ENCODE measurements at regions of chr5 and their contacts with region 1.

Region 1: GRCh38 chr5:88826646-88827585 is 56.1 kb downstream of the MEF2C start:
- DNase-seq: peak; percentile 26
- ATAC-seq: peak; percentile 71
- H3K4me3 Mint-ChIP-seq: peak overlapping the region; percentile 5
- H3K27ac Mint-ChIP-seq: peak overlapping the region; percentile 1
- H3K4me1 Mint-ChIP-seq: peaks cover 43% of the 10 kb centered on the region
- H3K27me3 Mint-ChIP-seq: peaks cover 25% of the 10 kb centered on the region

Region 2: GRCh38 chr5:88518131-88519016 is 308.5 kb before region 1 on chr5:
- CTCF ChIA-PET with region 1: no interaction called
- POLR2A ChIA-PET with region 1: no interaction called
- intact Hi-C with region 1: no loop called
- DNase-seq: no peak
- ATAC-seq: no peak
- H3K4me3 Mint-ChIP-seq: no peak overlapping the region
- H3K27ac Mint-ChIP-seq: no peak overlapping the region
- H3K4me1 Mint-ChIP-seq: no peaks in the 10 kb centered on the region
- H3K27me3 Mint-ChIP-seq: peaks cover 15% of the 10 kb centered on the region

Region 3: DNA sequence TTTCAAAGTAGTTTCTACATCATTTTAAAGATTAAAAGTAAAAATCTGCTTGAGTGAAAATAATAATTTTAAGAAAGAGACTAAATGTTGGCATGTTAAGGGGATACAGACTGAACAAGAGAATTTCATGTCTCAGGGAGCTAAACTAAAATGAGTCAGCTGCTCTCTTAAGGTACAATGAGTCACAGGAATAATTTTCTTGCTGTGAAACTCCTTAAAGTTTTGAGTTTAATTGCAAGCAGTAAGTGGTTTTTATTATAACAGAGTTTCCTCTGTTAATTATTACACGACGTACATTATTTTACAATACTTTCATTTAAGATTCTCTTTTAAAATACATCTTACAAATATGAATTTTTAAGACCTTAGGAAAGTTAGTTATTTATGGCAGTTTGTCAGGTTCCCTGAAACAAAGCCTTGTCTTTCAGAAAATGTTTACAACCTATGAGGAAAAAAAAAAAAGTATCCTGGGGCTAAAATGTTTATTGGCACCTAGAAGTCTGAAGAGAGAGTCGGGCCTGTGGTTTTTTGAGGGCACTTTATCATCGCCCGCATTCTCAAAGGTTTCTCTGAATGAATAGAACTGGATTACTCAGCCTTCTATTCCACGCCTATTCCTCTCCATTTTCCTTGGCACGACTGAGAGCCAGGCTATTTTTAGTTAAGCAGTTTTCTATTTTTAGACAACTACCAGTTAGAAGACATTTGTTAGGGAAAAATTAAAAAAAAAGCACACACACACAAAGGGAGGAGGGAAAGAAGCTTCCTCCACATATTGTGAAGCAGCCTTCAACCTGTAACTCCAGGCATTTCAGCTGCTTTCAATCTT is 41.3 kb before region 1 on chr5:
- CTCF ChIA-PET with region 1: interaction called, 3 read pairs
- POLR2A ChIA-PET with region 1: no interaction called
- intact Hi-C with region 1: loop called (anchors 1 kb)
- DNase-seq: peak; percentile 30
- ATAC-seq: peak; percentile 89
- H3K4me3 Mint-ChIP-seq: no peak overlapping the region
- H3K27ac Mint-ChIP-seq: no peak overlapping the region
- H3K4me1 Mint-ChIP-seq: peaks cover 17% of the 10 kb centered on the region
- H3K27me3 Mint-ChIP-seq: peaks cover 12% of the 10 kb centered on the region

Region 4: GRCh38 chr5:88845081-88845697 is 18.3 kb after region 1 on chr5:
- CTCF ChIA-PET with region 1: interaction called, 3 read pairs
- POLR2A ChIA-PET with region 1: no interaction called
- intact Hi-C with region 1: loop called (anchors 1 kb)
- DNase-seq: no peak
- ATAC-seq: peak; percentile 95
- H3K4me3 Mint-ChIP-seq: no peak overlapping the region
- H3K27ac Mint-ChIP-seq: no peak overlapping the region
- H3K4me1 Mint-ChIP-seq: peaks cover 11% of the 10 kb centered on the region
- H3K27me3 Mint-ChIP-seq: peaks cover 17% of the 10 kb centered on the region

Region 5: DNA sequence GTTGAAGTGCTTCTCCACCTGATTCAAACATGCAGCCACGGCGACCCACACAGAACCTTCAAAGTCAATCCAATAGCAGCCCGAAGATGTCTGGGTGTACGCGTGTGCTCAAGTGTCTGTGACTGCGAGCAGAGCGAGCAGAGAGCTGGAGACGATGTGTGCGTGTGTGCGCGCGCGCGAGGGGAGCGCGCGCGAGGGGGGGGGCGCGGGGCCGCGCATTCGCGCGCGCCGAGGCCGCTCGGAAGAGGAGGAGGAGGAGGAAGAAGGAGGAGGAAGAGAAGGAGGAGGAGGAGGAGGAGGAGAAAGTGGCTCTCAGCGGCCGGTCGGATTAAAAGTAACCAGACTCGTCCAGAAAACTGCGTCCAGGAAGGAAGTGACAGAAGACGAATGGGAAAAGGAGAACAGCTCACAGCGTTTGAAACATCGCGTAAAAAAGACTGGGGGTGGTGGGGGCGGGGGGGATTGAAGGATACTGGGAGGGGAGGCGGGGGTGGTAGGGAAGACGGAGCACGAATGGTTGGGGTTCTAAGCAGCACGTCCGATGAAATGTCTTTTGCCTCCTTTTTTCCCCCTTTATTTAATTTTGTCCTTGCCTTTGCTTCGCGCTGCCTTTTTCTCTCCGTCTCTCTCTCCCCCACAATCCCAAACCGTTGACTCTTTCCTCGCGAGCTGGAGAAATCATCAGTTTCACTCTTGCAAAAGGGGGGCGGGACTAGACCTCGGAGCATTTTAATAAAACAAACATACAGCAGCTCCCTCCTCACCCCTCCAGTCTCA is 56.3 kb after region 1 on chr5 and contains the start of gene MEF2C:
- CTCF ChIA-PET with region 1: no interaction called
- POLR2A ChIA-PET with region 1: no interaction called
- intact Hi-C with region 1: loop called in 1 of 2 experiments (anchors 2 kb)
- DNase-seq: peak; percentile 32
- ATAC-seq: peak; percentile 65
- H3K4me3 Mint-ChIP-seq: peak within 1 kb of the TSS; percentile 75
- H3K27ac Mint-ChIP-seq: no peak within 1 kb of the TSS
- H3K4me1 Mint-ChIP-seq: peaks cover 21% of the 10 kb centered on the region
- H3K27me3 Mint-ChIP-seq: peaks cover 48% of the 10 kb centered on the region
- total RNA-seq, gene MEF2C: 0.07 to 0.12 TPM

Region 6: GRCh38 chr5:89313804-89314588 is 487.1 kb after region 1 on chr5:
- CTCF ChIA-PET with region 1: no interaction called
- POLR2A ChIA-PET with region 1: no interaction called
- intact Hi-C with region 1: loop called in 1 of 2 experiments (anchors 5 kb)
- DNase-seq: peak; percentile 38
- ATAC-seq: peak; percentile 90
- H3K4me3 Mint-ChIP-seq: no peak overlapping the region
- H3K27ac Mint-ChIP-seq: peak overlapping the region; percentile 61
- H3K4me1 Mint-ChIP-seq: peaks cover 19% of the 10 kb centered on the region
- H3K27me3 Mint-ChIP-seq: no peaks in the 10 kb centered on the region

Measured in activated CD4-positive, alpha-beta T cell treated with anti-CD3 and anti-CD28 coated beads for 36 hours (primary cell).